Activated CD8-positive, alpha-beta T cell treated with anti-CD3 and anti-CD28 coated beads for 36 hours (primary cell): ENCODE measurements at regions of chr7 and their contacts with region 1.

Region 1: GRCh38 chr7:100691676-100692577 is 2.1 kb downstream of the GIGYF1 start:
- DNase-seq: peak; percentile 88
- ATAC-seq: peak; percentile 77
- H3K4me3 Mint-ChIP-seq: peak overlapping the region; percentile 88
- H3K27ac Mint-ChIP-seq: peak overlapping the region; percentile 91
- H3K4me1 Mint-ChIP-seq: peaks cover 54% of the 10 kb centered on the region
- H3K27me3 Mint-ChIP-seq: no peaks in the 10 kb centered on the region
- CTCF ChIP-seq: peak; percentile 90

Region 2: GRCh38 chr7:100586266-100587025 is 105.5 kb before region 1 on chr7 and contains the start of gene FBXO24:
- CTCF ChIA-PET with region 1: interaction called, 26 read pairs
- POLR2A ChIA-PET with region 1: interaction called, 4 read pairs
- intact Hi-C with region 1: no loop called
- DNase-seq: peak; percentile 99
- ATAC-seq: peak; percentile 84
- H3K4me3 Mint-ChIP-seq: peak within 1 kb of the TSS; percentile 98
- H3K27ac Mint-ChIP-seq: peak within 1 kb of the TSS; percentile 93
- H3K4me1 Mint-ChIP-seq: peaks cover 20% of the 10 kb centered on the region
- H3K27me3 Mint-ChIP-seq: peaks cover 5% of the 10 kb centered on the region
- CTCF ChIP-seq: no peak
- total RNA-seq, gene FBXO24: 1.4 to 1.5 TPM

Region 3: DNA sequence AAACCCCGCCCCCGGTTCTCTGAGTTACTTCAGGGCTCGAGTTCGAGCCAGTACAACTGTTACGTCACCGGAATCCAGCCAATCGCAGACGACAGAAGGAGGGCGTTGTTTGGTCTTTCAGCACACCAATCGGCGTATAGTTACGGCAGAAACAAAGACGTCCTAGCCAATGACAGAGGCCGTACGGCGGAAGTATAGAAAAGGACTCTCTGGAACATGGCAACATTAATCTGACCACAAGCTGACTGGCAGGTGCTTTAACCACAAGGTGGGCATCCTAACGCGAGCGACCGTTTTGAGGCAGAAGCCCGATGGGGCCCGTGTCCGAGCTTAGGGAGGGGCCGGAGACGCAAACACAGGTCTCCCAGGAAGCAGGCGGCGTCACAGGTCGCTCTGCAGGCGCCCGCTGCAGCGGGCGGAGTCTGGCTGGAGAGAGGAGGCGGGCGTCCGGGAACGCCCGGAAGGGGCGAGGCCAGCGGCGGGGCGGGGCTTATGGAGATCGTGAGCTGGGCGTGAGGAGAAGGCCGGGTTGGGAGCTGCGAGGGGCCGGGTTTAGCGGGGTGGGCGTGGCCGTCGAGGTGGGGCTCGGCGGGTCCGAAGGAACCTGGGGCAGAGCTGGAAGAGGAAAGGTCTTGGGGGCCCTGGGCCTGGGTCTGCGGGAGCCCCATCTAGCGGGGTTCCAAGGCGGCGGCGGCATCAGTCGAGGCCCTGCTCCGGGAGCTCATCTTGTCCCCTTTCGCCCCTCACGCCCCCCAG is 79.8 kb before region 1 on chr7 and contains the start of gene MOSPD3:
- CTCF ChIA-PET with region 1: interaction called, 36 read pairs
- POLR2A ChIA-PET with region 1: interaction called, 4 read pairs
- intact Hi-C with region 1: no loop called
- DNase-seq: peak; percentile 99
- ATAC-seq: peak; percentile 94
- H3K4me3 Mint-ChIP-seq: peak within 1 kb of the TSS; percentile 88
- H3K27ac Mint-ChIP-seq: peak within 1 kb of the TSS; percentile 100
- H3K4me1 Mint-ChIP-seq: peaks cover 9% of the 10 kb centered on the region
- H3K27me3 Mint-ChIP-seq: no peaks in the 10 kb centered on the region
- CTCF ChIP-seq: no peak
- total RNA-seq, gene MOSPD3: 9.6 to 10.5 TPM

Region 4: DNA sequence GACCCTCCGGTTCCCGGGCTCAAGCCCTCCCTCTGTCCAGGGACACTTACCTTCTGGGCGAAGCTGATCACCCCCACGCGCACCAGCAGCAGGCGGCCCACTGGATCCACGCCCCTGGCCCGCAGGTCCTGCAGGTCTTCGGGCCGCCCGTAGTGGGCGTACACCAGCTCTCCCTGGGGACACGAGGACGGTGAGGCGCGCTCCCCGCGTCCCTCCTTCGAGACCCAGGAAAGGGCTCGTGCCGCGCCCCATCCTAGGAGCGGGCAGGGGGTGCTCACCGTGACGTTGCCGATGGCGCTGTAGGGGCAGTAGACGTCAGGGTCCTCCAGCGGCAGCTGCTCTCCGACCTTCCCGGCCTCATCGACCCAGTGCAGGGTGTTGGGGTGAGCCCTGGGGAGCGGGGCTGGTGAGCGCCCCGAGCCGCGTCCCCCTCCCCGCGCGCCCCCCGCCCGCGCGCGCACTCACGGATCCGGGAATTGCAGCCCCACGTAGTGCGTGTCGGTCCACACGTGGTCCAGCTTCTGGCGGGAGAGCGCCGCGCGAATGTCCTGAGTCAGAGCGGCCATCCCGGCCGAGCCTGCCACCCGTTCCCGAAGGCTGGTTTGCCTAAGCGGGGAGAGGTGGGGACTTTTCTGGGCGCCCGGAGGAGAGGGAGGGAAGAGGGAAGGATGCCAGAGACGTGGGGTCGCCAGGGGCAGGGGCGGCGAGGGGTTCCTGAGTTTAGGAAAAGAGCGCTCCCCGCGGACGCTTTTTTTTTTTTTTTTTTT is 58.8 kb before region 1 on chr7:
- CTCF ChIA-PET with region 1: interaction called, 46 read pairs
- POLR2A ChIA-PET with region 1: interaction called, 3 read pairs
- intact Hi-C with region 1: no loop called
- DNase-seq: peak; percentile 73
- ATAC-seq: peak; percentile 77
- H3K4me3 Mint-ChIP-seq: peak overlapping the region; percentile 82
- H3K27ac Mint-ChIP-seq: peak overlapping the region; percentile 93
- H3K4me1 Mint-ChIP-seq: peaks cover 23% of the 10 kb centered on the region
- H3K27me3 Mint-ChIP-seq: peaks cover 4% of the 10 kb centered on the region
- CTCF ChIP-seq: peak; percentile 51

Region 5: GRCh38 chr7:100753750-100754149 is 61.8 kb after region 1 on chr7:
- CTCF ChIA-PET with region 1: no interaction called
- POLR2A ChIA-PET with region 1: no interaction called
- intact Hi-C with region 1: no loop called
- DNase-seq: no peak
- ATAC-seq: no peak
- H3K4me3 Mint-ChIP-seq: no peak overlapping the region
- H3K27ac Mint-ChIP-seq: no peak overlapping the region
- H3K4me1 Mint-ChIP-seq: no peaks in the 10 kb centered on the region
- H3K27me3 Mint-ChIP-seq: peaks cover 16% of the 10 kb centered on the region
- CTCF ChIP-seq: no peak

Region 6: GRCh38 chr7:101077303-101078089 is 385.6 kb after region 1 on chr7:
- CTCF ChIA-PET with region 1: no interaction called
- POLR2A ChIA-PET with region 1: no interaction called
- intact Hi-C with region 1: no loop called
- DNase-seq: peak; percentile 92
- ATAC-seq: peak; percentile 99
- H3K4me3 Mint-ChIP-seq: no peak overlapping the region
- H3K27ac Mint-ChIP-seq: no peak overlapping the region
- H3K4me1 Mint-ChIP-seq: peaks cover 7% of the 10 kb centered on the region
- H3K27me3 Mint-ChIP-seq: no peaks in the 10 kb centered on the region
- CTCF ChIP-seq: peak; percentile 86